ENCODE measurements at regions of chr4 and their contacts with region 1.

Region 1: GRCh38 chr4:80072744-80073472 is at the start of gene ANTXR2:
- DNase-seq: peak; percentile 79
- ATAC-seq: peak; percentile 64
- H3K4me3 Mint-ChIP-seq: peak within 1 kb of the TSS; percentile 80
- H3K27ac Mint-ChIP-seq: peak within 1 kb of the TSS; percentile 82
- H3K4me1 Mint-ChIP-seq: peaks cover 87% of the 10 kb centered on the region
- H3K27me3 Mint-ChIP-seq: peaks cover 4% of the 10 kb centered on the region
- total RNA-seq, gene ANTXR2: 2.3 to 3.8 TPM

Region 2: GRCh38 chr4:79540143-79540542 is 532.8 kb before region 1 on chr4:
- CTCF ChIA-PET with region 1: no interaction called
- POLR2A ChIA-PET with region 1: no interaction called
- intact Hi-C with region 1: no loop called
- DNase-seq: peak; percentile 5
- ATAC-seq: peak; percentile 33
- H3K4me3 Mint-ChIP-seq: no peak overlapping the region
- H3K27ac Mint-ChIP-seq: no peak overlapping the region
- H3K4me1 Mint-ChIP-seq: no peaks in the 10 kb centered on the region
- H3K27me3 Mint-ChIP-seq: no peaks in the 10 kb centered on the region

Region 3: DNA sequence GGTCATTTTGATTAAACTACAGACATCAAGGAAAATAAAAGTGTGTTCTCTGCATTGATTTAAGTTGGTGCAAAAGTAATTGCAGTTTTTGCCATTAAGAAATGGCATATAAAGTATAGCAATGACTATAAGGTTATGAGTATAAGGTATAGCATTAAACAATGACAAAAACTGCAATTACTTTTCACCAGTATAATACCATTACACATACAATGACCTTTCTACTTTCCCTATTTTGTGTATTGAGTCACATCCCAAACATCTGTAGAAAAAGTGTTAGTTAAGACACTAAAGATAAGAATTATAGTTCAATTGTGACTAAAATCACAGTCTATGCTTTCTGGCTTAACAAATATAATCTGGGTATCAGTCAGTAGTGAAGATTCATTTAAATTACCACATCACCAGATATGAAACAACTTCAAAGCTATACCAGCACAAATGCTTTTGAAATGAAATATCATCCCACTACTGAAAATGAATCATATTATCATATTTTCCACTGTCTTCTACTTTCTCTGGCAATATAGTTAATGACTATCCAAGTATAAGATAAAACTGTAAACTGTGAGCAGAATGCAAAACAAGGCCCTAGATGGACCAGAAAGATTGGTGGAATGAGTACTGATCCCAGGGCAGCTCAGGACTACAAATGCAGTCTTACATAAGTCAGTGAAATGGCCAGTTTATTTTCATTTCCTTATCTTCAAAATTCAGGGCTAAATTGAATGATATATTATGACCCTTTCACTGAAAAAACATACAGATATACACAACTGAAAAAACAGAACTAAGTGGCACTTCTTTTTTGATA is 241.0 kb before region 1 on chr4:
- CTCF ChIA-PET with region 1: no interaction called
- POLR2A ChIA-PET with region 1: no interaction called
- intact Hi-C with region 1: loop called (anchors 2 to 5 kb)
- DNase-seq: no peak
- ATAC-seq: peak; percentile 89
- H3K4me3 Mint-ChIP-seq: no peak overlapping the region
- H3K27ac Mint-ChIP-seq: peak overlapping the region; percentile 3
- H3K4me1 Mint-ChIP-seq: peaks cover 10% of the 10 kb centered on the region
- H3K27me3 Mint-ChIP-seq: peaks cover 17% of the 10 kb centered on the region

Region 4: GRCh38 chr4:80007745-80008149 is 65.2 kb before region 1 on chr4:
- CTCF ChIA-PET with region 1: no interaction called
- POLR2A ChIA-PET with region 1: no interaction called
- intact Hi-C with region 1: loop called (anchors 5 kb)
- DNase-seq: no peak
- ATAC-seq: peak; percentile 68
- H3K4me3 Mint-ChIP-seq: no peak overlapping the region
- H3K27ac Mint-ChIP-seq: peak overlapping the region; percentile 67
- H3K4me1 Mint-ChIP-seq: peaks cover 43% of the 10 kb centered on the region
- H3K27me3 Mint-ChIP-seq: no peaks in the 10 kb centered on the region

Region 5: GRCh38 chr4:80101792-80102116 is 28.8 kb after region 1 on chr4:
- CTCF ChIA-PET with region 1: no interaction called
- POLR2A ChIA-PET with region 1: no interaction called
- intact Hi-C with region 1: loop called in 1 of 2 experiments (anchors 2 kb)
- DNase-seq: no peak
- ATAC-seq: peak; percentile 78
- H3K4me3 Mint-ChIP-seq: no peak overlapping the region
- H3K27ac Mint-ChIP-seq: no peak overlapping the region
- H3K4me1 Mint-ChIP-seq: peaks cover 12% of the 10 kb centered on the region
- H3K27me3 Mint-ChIP-seq: no peaks in the 10 kb centered on the region

Region 6: GRCh38 chr4:80173401-80173800 is 100.5 kb after region 1 on chr4:
- CTCF ChIA-PET with region 1: interaction called, 4 read pairs
- POLR2A ChIA-PET with region 1: no interaction called
- intact Hi-C with region 1: loop called (anchors 2 kb)
- DNase-seq: peak; percentile 72
- ATAC-seq: peak; percentile 91
- H3K4me3 Mint-ChIP-seq: peak overlapping the region; percentile 43
- H3K27ac Mint-ChIP-seq: peak overlapping the region; percentile 79
- H3K4me1 Mint-ChIP-seq: peaks cover 51% of the 10 kb centered on the region
- H3K27me3 Mint-ChIP-seq: no peaks in the 10 kb centered on the region